Activated CD4-positive, alpha-beta memory T cell treated with anti-CD3 and anti-CD28 coated beads, Interleukin-2, amount 10 ng/mL, durations not matched to agents 7 days and 5 days (primary cell): ENCODE measurements at regions of chr5 and their contacts with region 1.

Region 1: DNA sequence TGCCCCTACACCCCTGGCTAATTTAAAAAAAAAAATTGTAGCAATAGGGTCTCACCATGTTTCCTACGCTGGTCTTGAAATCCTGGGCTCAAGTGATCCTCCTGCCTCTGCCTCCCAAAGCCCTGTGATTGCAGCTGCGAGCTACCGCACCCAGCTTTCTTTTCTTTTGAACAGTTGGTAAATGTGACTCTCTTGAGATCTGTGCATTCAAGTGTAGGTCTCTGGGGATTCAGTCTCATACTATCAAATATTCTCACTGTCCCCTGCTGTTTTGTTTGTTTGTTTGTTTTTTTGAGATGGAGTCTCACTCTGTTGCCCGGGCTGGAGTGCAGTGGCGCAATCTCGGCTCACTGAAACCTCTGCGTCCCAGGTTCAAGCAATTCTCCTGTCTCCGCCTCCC is 42.3 kb upstream of the CXXC5 start:
- DNase-seq: no peak
- H3K4me3 Mint-ChIP-seq: no peak overlapping the region
- H3K27ac Mint-ChIP-seq: no peak overlapping the region
- H3K4me1 Mint-ChIP-seq: peaks cover 10% of the 10 kb centered on the region
- H3K27me3 Mint-ChIP-seq: no peaks in the 10 kb centered on the region

Region 2: GRCh38 chr5:139439013-139439903 is 166.6 kb before region 1 on chr5 and contains the start of gene DNAJC18:
- CTCF ChIA-PET with region 1: no interaction called
- POLR2A ChIA-PET with region 1: no interaction called
- DNase-seq: peak; percentile 92
- H3K4me3 Mint-ChIP-seq: peak within 1 kb of the TSS; percentile 92
- H3K27ac Mint-ChIP-seq: peak within 1 kb of the TSS; percentile 98
- H3K4me1 Mint-ChIP-seq: peaks cover 70% of the 10 kb centered on the region
- H3K27me3 Mint-ChIP-seq: no peaks in the 10 kb centered on the region
- total RNA-seq, gene DNAJC18: 16.1 to 17.0 TPM

Region 3: GRCh38 chr5:139574641-139575312 is 31.1 kb before region 1 on chr5:
- CTCF ChIA-PET with region 1: interaction called, 11 read pairs
- POLR2A ChIA-PET with region 1: no interaction called
- DNase-seq: no peak
- H3K4me3 Mint-ChIP-seq: no peak overlapping the region
- H3K27ac Mint-ChIP-seq: peak overlapping the region; percentile 53
- H3K4me1 Mint-ChIP-seq: peaks cover 69% of the 10 kb centered on the region
- H3K27me3 Mint-ChIP-seq: no peaks in the 10 kb centered on the region

Region 4: GRCh38 chr5:139660923-139661814 is 55.3 kb after region 1 on chr5:
- CTCF ChIA-PET with region 1: no interaction called
- POLR2A ChIA-PET with region 1: no interaction called
- DNase-seq: no peak
- H3K4me3 Mint-ChIP-seq: no peak overlapping the region
- H3K27ac Mint-ChIP-seq: no peak overlapping the region
- H3K4me1 Mint-ChIP-seq: peaks cover 2% of the 10 kb centered on the region
- H3K27me3 Mint-ChIP-seq: no peaks in the 10 kb centered on the region

Region 5: GRCh38 chr5:139725073-139725830 is 119.4 kb after region 1 on chr5:
- CTCF ChIA-PET with region 1: no interaction called
- POLR2A ChIA-PET with region 1: no interaction called
- DNase-seq: no peak
- H3K4me3 Mint-ChIP-seq: no peak overlapping the region
- H3K27ac Mint-ChIP-seq: no peak overlapping the region
- H3K4me1 Mint-ChIP-seq: no peaks in the 10 kb centered on the region
- H3K27me3 Mint-ChIP-seq: no peaks in the 10 kb centered on the region